Aorta (tissue), 5 donors: ENCODE measurements at regions of chr9 and their contacts with region 1.

Region 1: GRCh38 chr9:137123468-137123837 is 8.9 kb upstream of the DPP7 start:
- DNase-seq: no peak
- ATAC-seq: no peak
- H3K4me3 ChIP-seq: no peak overlapping the region
- H3K27ac ChIP-seq: no peak overlapping the region
- H3K4me1 ChIP-seq: no peaks in the 10 kb centered on the region
- H3K27me3 ChIP-seq: no peaks in the 10 kb centered on the region

Region 2: DNA sequence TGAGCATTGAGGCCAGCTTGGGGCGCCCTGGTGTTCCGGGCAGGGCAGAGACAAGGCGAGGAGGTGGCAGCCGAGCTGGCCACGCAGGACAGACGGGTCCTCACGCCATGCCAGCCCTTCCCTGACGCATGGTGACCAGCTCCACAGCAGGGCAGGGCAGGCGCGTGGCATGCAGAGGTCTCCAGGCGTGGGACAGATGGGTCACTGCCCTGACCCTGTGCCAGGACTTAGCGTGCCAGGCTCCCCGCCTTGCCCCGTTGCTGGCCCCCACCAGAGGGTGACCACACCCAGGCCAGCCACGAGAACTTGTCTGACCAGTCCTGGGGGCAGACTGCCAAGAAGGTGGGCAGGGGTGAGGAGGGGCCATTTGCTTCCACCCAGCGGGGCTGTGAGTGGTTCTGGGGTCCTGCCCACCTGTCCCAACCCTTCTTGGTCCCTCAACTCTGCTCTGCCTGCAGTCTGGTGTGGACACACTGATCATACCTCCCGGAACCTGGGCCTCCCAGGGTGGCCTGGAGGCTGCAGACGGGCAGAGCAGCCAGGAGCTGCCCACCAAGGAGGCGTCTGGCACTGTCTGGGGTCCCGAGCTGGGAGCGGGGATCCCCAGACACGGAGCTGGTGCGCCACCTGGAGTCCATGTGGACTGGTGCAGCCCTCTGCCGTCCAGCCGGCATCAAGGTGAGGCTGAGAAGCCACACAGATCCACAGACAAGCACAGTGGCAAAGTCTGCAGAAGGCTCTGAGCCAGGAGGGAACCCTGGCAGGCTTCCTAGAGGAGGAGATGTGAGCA is 103.8 kb after region 1 on chr9 and contains the start of gene RNF224:
- intact Hi-C with region 1: loop called (anchors 2 to 5 kb)
- DNase-seq: peak; percentile 80 to 91
- ATAC-seq: no peak
- H3K4me3 ChIP-seq: no peak within 1 kb of the TSS
- H3K27ac ChIP-seq: no peak within 1 kb of the TSS
- H3K4me1 ChIP-seq: no peaks in the 10 kb centered on the region
- H3K27me3 ChIP-seq: no peaks in the 10 kb centered on the region
- total RNA-seq, gene RNF224: not detected